Aorta (tissue), 5 donors: ENCODE measurements at regions of chr2 and their contacts with region 1.

Region 1: DNA sequence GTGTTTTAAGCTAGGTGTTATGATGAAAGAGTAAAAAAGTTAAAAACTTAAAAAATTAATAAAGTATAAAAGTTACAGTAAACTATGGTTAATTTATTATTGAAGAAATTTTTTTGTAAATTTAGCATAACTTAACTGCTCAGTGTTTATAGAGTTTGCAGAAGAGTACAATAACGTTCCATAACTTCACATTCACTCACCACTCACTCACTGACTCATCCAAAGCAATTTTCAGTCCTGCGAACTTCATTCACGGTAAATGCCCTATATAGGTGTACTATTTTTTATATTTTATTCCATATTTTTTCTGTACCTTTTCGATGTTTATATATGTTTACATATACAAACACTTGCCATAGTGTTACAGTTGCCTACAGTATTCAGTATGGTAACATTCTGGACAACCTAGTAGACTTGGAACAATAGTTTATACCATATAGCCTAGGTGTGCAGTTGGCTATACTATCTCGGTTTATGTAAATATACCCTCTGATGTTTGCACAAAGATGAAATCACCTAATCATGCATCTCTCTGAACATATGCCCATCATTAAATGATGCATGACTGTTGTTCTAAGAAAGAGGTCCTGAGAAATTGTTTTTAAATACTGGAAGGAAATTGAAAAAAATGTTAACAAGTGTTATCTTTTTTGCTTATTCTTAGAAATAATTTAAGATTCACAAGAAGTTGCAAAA is 694.6 kb upstream of the SLC39A10 start:
- DNase-seq: no peak
- ATAC-seq: no peak
- H3K4me3 ChIP-seq: no peak overlapping the region
- H3K27ac ChIP-seq: no peak overlapping the region
- H3K4me1 ChIP-seq: no peaks in the 10 kb centered on the region
- H3K27me3 ChIP-seq: no peaks in the 10 kb centered on the region

Region 2: GRCh38 chr2:194661431-194661830 is 301.0 kb before region 1 on chr2:
- intact Hi-C with region 1: no loop called
- DNase-seq: no peak
- ATAC-seq: no peak
- H3K4me3 ChIP-seq: no peak overlapping the region
- H3K27ac ChIP-seq: no peak overlapping the region
- H3K4me1 ChIP-seq: no peaks in the 10 kb centered on the region
- H3K27me3 ChIP-seq: no peaks in the 10 kb centered on the region

Region 3: GRCh38 chr2:194896871-194897270 is 65.5 kb before region 1 on chr2:
- intact Hi-C with region 1: loop called in 1 of 2 experiments (anchors 2 kb)
- DNase-seq: no peak
- ATAC-seq: no peak
- H3K4me3 ChIP-seq: no peak overlapping the region
- H3K27ac ChIP-seq: no peak overlapping the region
- H3K4me1 ChIP-seq: no peaks in the 10 kb centered on the region
- H3K27me3 ChIP-seq: no peaks in the 10 kb centered on the region

Region 4: DNA sequence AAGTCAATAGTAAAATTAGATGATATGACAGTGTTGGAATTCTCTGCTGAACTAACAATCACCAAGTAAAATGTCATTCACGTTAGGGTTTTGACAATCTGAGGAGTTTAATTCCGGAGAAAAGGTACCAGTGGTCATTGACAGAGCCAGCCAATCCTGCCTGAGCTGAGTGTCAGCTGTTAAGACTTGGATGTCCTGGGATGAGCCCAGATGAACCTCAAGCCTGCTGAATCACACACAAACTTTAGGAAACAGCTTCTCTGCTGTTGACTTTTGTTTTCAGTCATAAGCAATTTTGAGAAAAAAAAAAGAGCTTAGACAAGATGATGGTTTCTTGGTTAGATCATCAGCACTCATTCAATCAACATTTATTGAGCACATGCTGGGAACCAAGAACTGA is 94.6 kb after region 1 on chr2:
- intact Hi-C with region 1: no loop called
- DNase-seq: no peak
- ATAC-seq: no peak
- H3K4me3 ChIP-seq: no peak overlapping the region
- H3K27ac ChIP-seq: no peak overlapping the region
- H3K4me1 ChIP-seq: no peaks in the 10 kb centered on the region
- H3K27me3 ChIP-seq: no peaks in the 10 kb centered on the region

Region 5: DNA sequence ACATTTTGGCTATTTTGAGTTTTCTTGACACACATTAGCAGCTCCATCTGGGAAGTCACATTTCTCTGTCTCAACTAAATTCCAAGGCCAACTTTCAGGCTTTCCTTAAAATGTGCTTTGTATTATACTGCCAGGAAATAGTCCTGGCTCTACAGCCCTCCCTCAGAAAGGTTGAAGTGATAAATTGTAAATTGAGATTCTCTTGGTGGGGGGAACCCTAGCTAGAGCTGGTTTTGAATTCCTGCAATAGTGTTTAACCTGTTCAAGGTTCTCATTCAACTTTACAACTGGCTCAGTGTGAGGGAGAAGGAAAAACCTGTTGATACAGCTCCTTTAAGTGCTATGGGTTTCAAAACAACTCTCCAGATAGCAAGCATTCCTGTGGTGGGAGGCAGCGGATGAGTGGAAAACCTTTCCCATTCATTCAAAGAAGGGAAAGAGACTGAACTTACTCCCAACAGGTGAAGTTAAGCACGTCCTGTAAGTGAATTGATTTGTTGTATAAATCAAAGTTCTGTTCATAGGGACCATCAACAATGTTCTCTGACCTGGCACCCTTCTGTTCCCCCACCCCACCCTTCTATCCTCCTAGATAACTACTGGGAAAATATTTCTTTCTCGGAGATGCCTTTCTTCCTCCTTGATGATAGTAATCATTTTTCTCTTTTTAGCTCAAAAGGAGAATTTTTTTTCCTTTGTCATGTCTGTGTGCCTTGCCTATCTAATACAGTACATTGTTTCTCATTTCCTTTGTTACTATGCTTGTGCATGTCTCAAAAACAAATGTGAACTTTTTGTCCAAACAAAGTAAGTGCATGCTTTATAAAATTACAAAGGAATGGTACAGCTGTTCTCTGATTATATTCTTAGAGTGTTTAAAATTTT is 650.5 kb after region 1 on chr2:
- intact Hi-C with region 1: no loop called
- DNase-seq: no peak
- ATAC-seq: no peak
- H3K4me3 ChIP-seq: no peak overlapping the region
- H3K27ac ChIP-seq: peak overlapping the region in 1 of 2 donors; percentile 67
- H3K4me1 ChIP-seq: peaks cover 0 to 3% of the 10 kb centered on the region in 2 donors
- H3K27me3 ChIP-seq: no peaks in the 10 kb centered on the region